Endothelial cell of umbilical vein (primary cell): ENCODE measurements at regions of chr4 and their contacts with region 1.

Region 1: GRCh38 chr4:40316782-40317635 is 18.1 kb upstream of the CHRNA9 start:
- DNase-seq: peak; percentile 95
- H3K4me3 ChIP-seq: peak overlapping the region in 2 of 3 experiments; percentile 7 to 49
- H3K27ac ChIP-seq: peak overlapping the region; percentile 95
- H3K4me1 ChIP-seq: peaks cover 15% of the 10 kb centered on the region
- H3K27me3 ChIP-seq: no peaks in the 10 kb centered on the region
- CTCF ChIP-seq: peak; percentile 76 to 83
- POLR2A ChIP-seq: no peak

Region 2: DNA sequence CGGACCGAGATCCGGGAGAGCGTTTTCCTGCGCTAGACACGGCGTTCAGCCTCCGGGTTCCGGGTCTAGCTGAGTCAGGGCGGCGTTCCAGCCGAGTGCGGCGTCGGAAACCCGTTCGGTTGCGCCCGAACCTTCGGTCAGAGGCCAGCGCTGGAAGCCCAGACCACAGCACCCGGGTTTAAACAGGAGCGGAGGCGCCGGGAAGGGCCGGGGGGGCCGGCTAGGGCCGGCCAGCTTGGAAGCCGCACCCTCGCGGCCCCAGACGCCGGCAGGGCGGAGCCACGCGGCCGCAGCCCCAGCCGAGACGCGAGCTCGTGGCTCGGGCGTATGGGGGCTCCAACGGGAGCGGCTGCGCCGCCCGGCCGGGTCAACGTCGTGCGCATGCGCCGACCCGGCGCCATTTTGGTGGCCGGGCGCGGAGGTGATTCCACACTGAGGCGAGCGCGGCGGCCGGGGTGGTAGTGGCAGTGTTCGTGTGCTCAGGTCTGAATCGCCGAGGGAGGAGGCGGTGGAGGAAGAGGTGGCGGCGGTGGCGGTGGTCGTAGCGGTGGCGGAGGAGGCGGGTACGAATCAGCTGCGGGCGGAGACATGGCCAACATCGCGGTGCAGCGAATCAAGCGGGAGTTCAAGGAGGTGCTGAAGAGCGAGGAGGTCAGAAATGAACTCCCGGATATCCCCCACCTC is 619.1 kb before region 1 on chr4 and contains the start of gene UBE2K:
- CTCF ChIA-PET with region 1: no interaction called
- POLR2A ChIA-PET with region 1: no interaction called
- dilution Hi-C with region 1: no loop called
- intact Hi-C with region 1: loop called (anchors 5 kb)
- DNase-seq: peak; percentile 81
- H3K4me3 ChIP-seq: peak within 1 kb of the TSS; percentile 39 to 97 (median 90)
- H3K27ac ChIP-seq: peak within 1 kb of the TSS; percentile 80
- H3K4me1 ChIP-seq: peaks cover 21% of the 10 kb centered on the region
- H3K27me3 ChIP-seq: no peaks in the 10 kb centered on the region
- CTCF ChIP-seq: no peak
- POLR2A ChIP-seq: peak; percentile 84
- total RNA-seq, gene UBE2K: 90.3 and 97.8 TPM in 2 replicates

Region 3: GRCh38 chr4:40121515-40121914 is 195.5 kb before region 1 on chr4:
- CTCF ChIA-PET with region 1: interaction called, 10 read pairs
- POLR2A ChIA-PET with region 1: no interaction called
- dilution Hi-C with region 1: no loop called
- intact Hi-C with region 1: no loop called
- DNase-seq: peak; percentile 93
- H3K4me3 ChIP-seq: no peak overlapping the region
- H3K27ac ChIP-seq: peak overlapping the region; percentile 82
- H3K4me1 ChIP-seq: peaks cover 18% of the 10 kb centered on the region
- H3K27me3 ChIP-seq: no peaks in the 10 kb centered on the region
- CTCF ChIP-seq: no peak
- POLR2A ChIP-seq: no peak

Region 4: DNA sequence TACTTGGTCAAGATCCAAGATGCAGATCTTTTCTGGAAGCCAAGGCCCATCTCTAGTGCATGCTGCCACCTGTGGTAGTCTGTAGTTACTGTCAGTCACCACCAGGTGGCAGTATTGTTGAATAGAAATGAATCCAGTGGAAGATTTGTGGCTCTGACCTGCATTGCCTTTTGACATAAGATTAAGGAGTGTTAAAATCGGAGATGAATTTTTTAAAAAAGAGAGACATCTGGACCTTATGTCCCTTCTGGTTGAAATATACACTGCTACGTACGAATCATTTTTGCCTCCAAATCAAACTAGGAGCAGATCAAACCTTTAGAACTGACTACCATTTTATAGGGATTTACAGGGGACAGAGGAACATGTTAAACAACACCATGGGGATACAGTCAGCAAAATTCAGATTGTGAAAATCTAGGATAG is 167.0 kb before region 1 on chr4:
- CTCF ChIA-PET with region 1: interaction called, 40 read pairs
- POLR2A ChIA-PET with region 1: no interaction called
- dilution Hi-C with region 1: no loop called
- intact Hi-C with region 1: loop called (anchors 2 kb)
- DNase-seq: peak; percentile 66
- H3K4me3 ChIP-seq: no peak overlapping the region
- H3K27ac ChIP-seq: no peak overlapping the region
- H3K4me1 ChIP-seq: no peaks in the 10 kb centered on the region
- H3K27me3 ChIP-seq: no peaks in the 10 kb centered on the region
- CTCF ChIP-seq: peak; percentile 66 to 70
- POLR2A ChIP-seq: no peak

Region 5: DNA sequence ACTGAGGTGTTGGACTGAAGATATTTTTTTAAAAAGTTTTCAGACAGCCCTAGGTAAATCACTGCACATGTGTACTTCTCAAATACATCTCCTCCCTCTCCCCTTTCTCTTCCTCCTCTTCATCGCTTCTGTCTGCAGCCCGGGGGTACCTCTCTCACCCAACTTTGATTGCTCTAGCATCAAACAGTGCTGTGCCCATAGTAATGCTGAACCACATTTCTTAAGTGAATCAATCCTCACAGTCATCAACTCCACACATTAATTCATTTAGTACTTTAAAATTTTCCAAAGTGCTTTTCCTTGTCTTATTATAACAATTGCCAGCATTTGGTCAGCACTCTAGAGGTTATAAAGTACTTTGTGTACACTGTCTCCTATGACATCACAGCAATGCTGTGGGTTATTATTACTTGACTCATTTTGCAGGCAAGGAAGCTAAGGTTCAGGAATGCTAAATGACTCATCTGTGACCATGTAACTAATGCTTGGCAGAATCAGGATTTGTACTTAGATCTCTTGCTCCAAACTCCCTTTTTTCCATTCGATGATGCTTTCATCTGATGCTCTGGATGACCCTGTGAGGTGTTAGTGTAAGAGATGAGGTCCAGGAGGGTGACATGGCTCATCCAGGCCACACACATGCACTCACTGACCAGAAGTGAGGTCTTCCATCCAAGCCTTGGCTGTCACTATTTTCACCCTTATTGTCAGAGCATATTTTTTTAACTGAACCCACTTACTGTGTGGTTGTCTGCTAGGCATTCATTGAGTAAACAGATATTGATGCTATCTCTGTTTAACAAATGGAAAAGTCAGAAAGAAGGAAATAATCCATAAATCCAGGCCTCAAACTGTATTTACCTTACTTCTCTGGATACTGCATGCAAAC is 61.4 kb before region 1 on chr4:
- CTCF ChIA-PET with region 1: interaction called, 17 read pairs
- POLR2A ChIA-PET with region 1: no interaction called
- dilution Hi-C with region 1: no loop called
- intact Hi-C with region 1: loop called (anchors 2 kb)
- DNase-seq: peak; percentile 96
- H3K4me3 ChIP-seq: peak overlapping the region in 1 of 3 experiments; percentile 9
- H3K27ac ChIP-seq: peak overlapping the region; percentile 67
- H3K4me1 ChIP-seq: peaks cover 29% of the 10 kb centered on the region
- H3K27me3 ChIP-seq: no peaks in the 10 kb centered on the region
- CTCF ChIP-seq: no peak
- POLR2A ChIP-seq: no peak

Region 6: GRCh38 chr4:40409835-40410234 is 92.8 kb after region 1 on chr4:
- CTCF ChIA-PET with region 1: no interaction called
- POLR2A ChIA-PET with region 1: no interaction called
- dilution Hi-C with region 1: no loop called
- intact Hi-C with region 1: no loop called
- DNase-seq: no peak
- H3K4me3 ChIP-seq: no peak overlapping the region
- H3K27ac ChIP-seq: no peak overlapping the region
- H3K4me1 ChIP-seq: no peaks in the 10 kb centered on the region
- H3K27me3 ChIP-seq: no peaks in the 10 kb centered on the region
- CTCF ChIP-seq: no peak
- POLR2A ChIP-seq: no peak

Region 7: DNA sequence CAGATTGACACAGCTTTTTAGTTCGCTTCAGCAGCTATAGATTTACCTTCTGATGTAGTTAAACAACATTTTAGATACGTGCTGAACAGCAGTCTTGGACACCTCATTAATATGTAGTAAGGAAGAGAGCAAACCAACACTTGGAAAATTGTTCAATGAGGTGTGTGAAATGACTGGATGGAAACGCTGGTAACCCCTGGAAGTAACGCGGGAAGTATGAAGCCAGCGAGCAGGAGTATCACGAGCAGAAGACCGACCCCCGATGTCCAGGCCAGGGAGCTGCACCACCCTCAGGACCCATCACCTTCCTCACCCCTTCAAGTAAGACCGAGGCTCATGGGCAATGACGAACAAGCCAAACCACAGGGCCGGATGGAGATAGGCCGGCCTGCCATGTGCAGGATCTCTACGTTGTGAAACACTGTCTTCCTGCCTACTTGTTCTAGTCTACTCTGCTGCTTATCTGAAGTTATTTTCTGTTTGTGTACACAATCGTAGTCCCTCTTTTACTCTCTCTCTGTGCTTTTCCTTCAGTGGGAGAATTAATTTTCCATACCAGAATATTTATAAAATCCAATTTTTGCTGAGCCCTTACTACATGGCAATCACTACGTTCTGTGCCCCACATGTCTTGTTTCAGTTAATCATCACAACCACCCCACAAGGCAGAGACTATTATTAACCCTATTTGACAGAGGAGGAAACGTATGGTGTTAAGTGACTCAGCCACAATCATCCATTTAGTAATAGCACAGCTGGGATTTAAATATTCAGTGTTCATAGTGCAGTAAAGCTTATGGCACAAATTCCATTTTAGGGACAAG is 675.7 kb after region 1 on chr4:
- CTCF ChIA-PET with region 1: no interaction called
- POLR2A ChIA-PET with region 1: no interaction called
- dilution Hi-C with region 1: no loop called
- intact Hi-C with region 1: no loop called
- DNase-seq: peak; percentile 82
- H3K4me3 ChIP-seq: no peak overlapping the region
- H3K27ac ChIP-seq: peak overlapping the region; percentile 84
- H3K4me1 ChIP-seq: peaks cover 62% of the 10 kb centered on the region
- H3K27me3 ChIP-seq: no peaks in the 10 kb centered on the region
- CTCF ChIP-seq: no peak
- POLR2A ChIP-seq: no peak